Panc1 (cell line): ENCODE measurements at regions of chr6 and their contacts with region 1.

Region 1: DNA sequence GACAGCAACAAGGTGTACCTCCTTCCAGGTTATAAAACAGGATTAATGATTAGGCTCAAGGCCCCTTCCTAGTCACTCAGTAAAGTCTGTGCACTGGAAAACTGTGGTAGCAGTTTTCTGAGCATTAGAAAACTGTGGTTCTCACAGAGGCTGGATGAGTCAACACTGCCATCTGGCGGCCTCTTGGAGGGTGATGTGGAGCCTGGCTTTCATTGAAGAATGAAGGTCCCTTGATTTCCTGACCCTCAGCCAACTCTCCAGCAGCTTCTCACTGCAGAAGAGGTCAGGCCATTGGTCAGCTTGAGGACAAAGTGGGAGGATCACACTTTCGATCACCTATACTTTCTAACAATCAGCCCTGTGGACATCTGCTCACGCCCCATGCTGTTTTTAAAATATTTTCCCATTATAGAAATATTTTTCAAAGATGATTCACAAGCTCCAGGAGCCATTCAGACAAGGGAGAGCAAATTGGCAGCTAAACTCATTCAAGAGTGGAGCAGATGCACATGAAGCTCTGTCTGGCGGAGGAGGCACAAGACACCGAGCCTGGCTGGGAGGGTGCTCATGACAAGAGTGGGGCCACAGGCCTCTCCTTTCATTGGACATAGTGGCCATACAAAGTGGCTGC is 23.2 kb downstream of the PSMB1 start:
- DNase-seq: peak; percentile 54
- ATAC-seq: peak; percentile 94
- H3K4me3 ChIP-seq: no peak overlapping the region
- H3K27ac ChIP-seq: no peak overlapping the region
- H3K4me1 ChIP-seq: no peaks in the 10 kb centered on the region
- H3K27me3 ChIP-seq: no peaks in the 10 kb centered on the region
- CTCF ChIP-seq: peak; percentile 97

Region 2: GRCh38 chr6:169789982-169790927 is 739.7 kb before region 1 on chr6:
- CTCF ChIA-PET with region 1: interaction called, 8 read pairs
- POLR2A ChIA-PET with region 1: no interaction called
- in situ Hi-C with region 1: no loop called
- intact Hi-C with region 1: loop called (anchors 2 kb)
- DNase-seq: peak; percentile 61
- ATAC-seq: peak; percentile 98
- H3K4me3 ChIP-seq: peak overlapping the region; percentile 48 to 68
- H3K27ac ChIP-seq: peak overlapping the region; percentile 65
- H3K4me1 ChIP-seq: peaks cover 11% of the 10 kb centered on the region
- H3K27me3 ChIP-seq: peaks cover 3% of the 10 kb centered on the region; the same call in 1 of the 2 replicates
- CTCF ChIP-seq: peak; percentile 100

Region 3: DNA sequence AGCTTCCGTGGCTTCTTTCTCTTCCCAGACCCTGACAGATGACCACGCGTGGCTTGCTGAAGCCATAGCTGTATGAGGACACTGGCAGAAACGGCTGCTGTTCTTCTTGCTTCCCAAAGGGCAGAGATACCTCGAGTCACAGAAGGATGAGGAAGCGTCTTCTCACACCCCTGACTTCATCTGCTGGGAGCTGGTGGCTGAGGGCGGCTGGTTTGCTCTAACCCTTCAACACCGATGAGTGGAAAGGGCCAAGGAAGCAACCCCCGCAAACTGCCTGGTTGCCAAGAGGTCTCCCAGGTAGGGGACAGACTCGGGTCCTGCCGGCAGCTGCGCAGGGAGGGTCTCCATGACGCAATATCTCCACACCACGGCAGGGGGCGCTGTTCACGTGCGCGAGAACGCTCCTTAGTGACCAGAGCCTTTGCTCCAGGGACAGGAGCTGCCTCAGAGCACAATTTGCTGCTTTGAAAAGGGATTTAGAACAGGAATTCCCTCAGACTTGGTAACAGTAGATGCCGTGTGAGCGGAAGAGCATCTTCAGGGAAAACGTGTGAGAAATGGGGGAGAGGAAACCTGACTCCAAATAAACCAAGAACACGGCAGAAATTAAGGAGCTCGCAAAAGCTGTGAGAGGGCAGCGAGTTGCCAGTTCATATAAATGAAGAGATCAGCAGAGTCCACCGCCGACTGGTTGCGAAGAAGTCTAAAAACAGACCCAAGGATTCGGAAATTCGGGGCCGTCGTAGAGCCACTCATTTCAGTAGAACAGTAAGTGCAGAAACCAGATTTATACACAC is 698.3 kb before region 1 on chr6:
- CTCF ChIA-PET with region 1: no interaction called
- POLR2A ChIA-PET with region 1: interaction called, 3 read pairs
- in situ Hi-C with region 1: no loop called
- intact Hi-C with region 1: loop called (anchors 5 kb)
- DNase-seq: peak; percentile 41
- ATAC-seq: peak; percentile 91
- H3K4me3 ChIP-seq: no peak overlapping the region
- H3K27ac ChIP-seq: no peak overlapping the region
- H3K4me1 ChIP-seq: no peaks in the 10 kb centered on the region
- H3K27me3 ChIP-seq: peaks cover 33% of the 10 kb centered on the region
- CTCF ChIP-seq: peak; percentile 98

Region 4: GRCh38 chr6:169959136-169960002 is 570.6 kb before region 1 on chr6:
- CTCF ChIA-PET with region 1: no interaction called
- POLR2A ChIA-PET with region 1: no interaction called
- in situ Hi-C with region 1: no loop called
- intact Hi-C with region 1: loop called (anchors 10 kb)
- DNase-seq: no peak
- ATAC-seq: no peak
- H3K4me3 ChIP-seq: no peak overlapping the region
- H3K27ac ChIP-seq: no peak overlapping the region
- H3K4me1 ChIP-seq: no peaks in the 10 kb centered on the region
- H3K27me3 ChIP-seq: no peaks in the 10 kb centered on the region
- CTCF ChIP-seq: no peak

Region 5: GRCh38 chr6:170295510-170296422 is 234.2 kb before region 1 on chr6:
- CTCF ChIA-PET with region 1: interaction called, 4 read pairs
- POLR2A ChIA-PET with region 1: no interaction called
- in situ Hi-C with region 1: no loop called
- intact Hi-C with region 1: loop called (anchors 10 kb)
- DNase-seq: no peak
- ATAC-seq: peak; percentile 30; the same call in 1 of the 2 replicates
- H3K4me3 ChIP-seq: peak overlapping the region; percentile 44 to 54
- H3K27ac ChIP-seq: no peak overlapping the region
- H3K4me1 ChIP-seq: peaks cover 11% of the 10 kb centered on the region
- H3K27me3 ChIP-seq: peaks cover 41% of the 10 kb centered on the region
- CTCF ChIP-seq: no peak

Region 6: GRCh38 chr6:170476360-170476759 is 53.6 kb before region 1 on chr6:
- CTCF ChIA-PET with region 1: no interaction called
- POLR2A ChIA-PET with region 1: no interaction called
- in situ Hi-C with region 1: no loop called
- intact Hi-C with region 1: no loop called
- DNase-seq: no peak
- ATAC-seq: no peak
- H3K4me3 ChIP-seq: no peak overlapping the region
- H3K27ac ChIP-seq: no peak overlapping the region
- H3K4me1 ChIP-seq: 0 out of 2 replicates have a peak, but pooled peaks cover 3% of the 10 kb centered on the region
- H3K27me3 ChIP-seq: peaks cover 12% of the 10 kb centered on the region
- CTCF ChIP-seq: no peak